ENCODE measurements at regions of chr12 and their contacts with region 1.

Region 1: DNA sequence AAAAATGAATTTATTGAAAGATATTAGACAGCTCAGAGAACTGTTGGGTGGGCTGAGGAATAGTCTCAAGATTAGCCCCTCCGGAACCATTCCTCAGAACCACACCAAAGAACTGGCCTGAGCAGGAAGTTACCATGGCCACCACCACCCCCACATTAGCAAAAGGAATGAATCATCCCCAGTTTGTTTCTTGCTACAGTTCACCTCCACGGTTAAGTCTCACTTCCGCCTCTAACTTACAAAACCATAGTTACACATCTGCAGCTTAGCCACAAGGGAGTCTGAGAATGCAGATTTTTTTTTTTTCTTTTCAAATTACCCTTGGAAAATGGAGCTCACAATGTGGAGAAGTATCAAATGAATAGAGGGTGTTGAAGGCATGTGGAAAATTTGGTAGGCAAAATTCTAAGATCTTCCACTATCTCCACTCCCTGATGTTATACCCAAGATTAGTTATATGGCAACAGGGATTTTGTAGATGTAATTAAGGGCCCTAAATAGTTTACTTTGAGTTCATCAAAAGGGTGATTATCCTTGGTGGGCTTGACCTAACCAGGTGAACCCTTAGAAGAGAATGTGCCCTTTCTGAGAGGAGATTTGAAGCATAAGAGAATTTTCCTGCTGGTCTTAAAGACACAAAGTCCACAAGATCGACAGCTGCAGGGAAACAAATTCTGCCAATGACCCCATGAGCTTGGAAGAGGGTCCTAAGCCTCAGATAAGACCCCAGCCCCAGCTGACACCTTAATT is 129.8 kb upstream of the KRR1 start:
- DNase-seq: peak; percentile 32
- H3K4me3 Mint-ChIP-seq: peak overlapping the region; percentile 19
- H3K27ac Mint-ChIP-seq: peak overlapping the region; percentile 89
- H3K4me1 Mint-ChIP-seq: peaks cover 34% of the 10 kb centered on the region
- H3K27me3 Mint-ChIP-seq: no peaks in the 10 kb centered on the region

Region 2: GRCh38 chr12:75658901-75659383 is 17.7 kb after region 1 on chr12:
- intact Hi-C with region 1: loop called (anchors 1 kb)
- DNase-seq: no peak
- H3K4me3 Mint-ChIP-seq: no peak overlapping the region
- H3K27ac Mint-ChIP-seq: peak overlapping the region; percentile 33
- H3K4me1 Mint-ChIP-seq: peaks cover 36% of the 10 kb centered on the region
- H3K27me3 Mint-ChIP-seq: no peaks in the 10 kb centered on the region

Region 3: DNA sequence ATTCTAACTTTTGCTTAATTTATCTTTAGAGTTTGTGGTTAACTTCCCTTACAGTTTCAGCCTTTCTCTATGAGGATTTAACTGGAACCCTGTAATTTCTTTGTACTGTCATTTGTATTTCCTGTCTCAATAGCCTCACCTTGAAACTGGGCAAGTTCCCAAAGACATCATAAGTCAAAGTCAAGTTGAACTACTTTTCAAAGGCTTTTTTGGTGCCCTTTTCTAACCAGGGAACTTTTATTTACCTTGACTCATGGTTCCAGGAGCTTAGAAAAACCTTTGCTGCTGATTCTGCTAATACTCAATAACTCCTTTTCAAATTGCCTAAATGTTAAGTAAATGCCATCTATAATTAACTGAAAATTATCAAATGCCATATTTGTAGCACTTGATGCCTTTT is 71.0 kb after region 1 on chr12:
- intact Hi-C with region 1: no loop called
- DNase-seq: no peak
- H3K4me3 Mint-ChIP-seq: no peak overlapping the region
- H3K27ac Mint-ChIP-seq: no peak overlapping the region
- H3K4me1 Mint-ChIP-seq: peaks cover 5% of the 10 kb centered on the region
- H3K27me3 Mint-ChIP-seq: peaks cover 4% of the 10 kb centered on the region

Region 4: DNA sequence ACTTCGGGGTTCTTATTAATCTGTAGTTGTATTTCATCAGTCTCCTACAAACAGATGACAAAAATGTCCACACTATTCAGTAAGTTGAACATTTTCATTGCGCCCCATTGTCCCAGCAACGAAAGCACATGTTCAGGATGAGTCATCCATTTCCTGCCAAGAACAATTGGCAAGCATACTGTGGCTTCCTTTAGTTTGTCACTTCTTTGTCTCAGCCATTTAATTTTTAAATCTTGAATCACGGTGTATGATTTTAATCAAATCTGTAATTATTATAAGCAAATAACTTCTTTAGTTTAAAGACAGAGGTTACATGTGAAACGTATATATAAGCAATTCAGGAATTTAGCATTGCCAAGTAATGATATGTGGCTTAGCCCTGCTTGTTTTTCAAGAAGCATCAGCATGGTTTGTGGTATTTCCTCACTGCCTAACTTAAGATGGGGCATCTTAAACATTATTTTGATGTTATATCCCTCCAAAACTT is 81.6 kb after region 1 on chr12:
- intact Hi-C with region 1: loop called (anchors 5 kb)
- DNase-seq: peak; percentile 29
- H3K4me3 Mint-ChIP-seq: peak overlapping the region; percentile 37
- H3K27ac Mint-ChIP-seq: peak overlapping the region; percentile 81
- H3K4me1 Mint-ChIP-seq: peaks cover 16% of the 10 kb centered on the region
- H3K27me3 Mint-ChIP-seq: peaks cover 3% of the 10 kb centered on the region

Region 5: DNA sequence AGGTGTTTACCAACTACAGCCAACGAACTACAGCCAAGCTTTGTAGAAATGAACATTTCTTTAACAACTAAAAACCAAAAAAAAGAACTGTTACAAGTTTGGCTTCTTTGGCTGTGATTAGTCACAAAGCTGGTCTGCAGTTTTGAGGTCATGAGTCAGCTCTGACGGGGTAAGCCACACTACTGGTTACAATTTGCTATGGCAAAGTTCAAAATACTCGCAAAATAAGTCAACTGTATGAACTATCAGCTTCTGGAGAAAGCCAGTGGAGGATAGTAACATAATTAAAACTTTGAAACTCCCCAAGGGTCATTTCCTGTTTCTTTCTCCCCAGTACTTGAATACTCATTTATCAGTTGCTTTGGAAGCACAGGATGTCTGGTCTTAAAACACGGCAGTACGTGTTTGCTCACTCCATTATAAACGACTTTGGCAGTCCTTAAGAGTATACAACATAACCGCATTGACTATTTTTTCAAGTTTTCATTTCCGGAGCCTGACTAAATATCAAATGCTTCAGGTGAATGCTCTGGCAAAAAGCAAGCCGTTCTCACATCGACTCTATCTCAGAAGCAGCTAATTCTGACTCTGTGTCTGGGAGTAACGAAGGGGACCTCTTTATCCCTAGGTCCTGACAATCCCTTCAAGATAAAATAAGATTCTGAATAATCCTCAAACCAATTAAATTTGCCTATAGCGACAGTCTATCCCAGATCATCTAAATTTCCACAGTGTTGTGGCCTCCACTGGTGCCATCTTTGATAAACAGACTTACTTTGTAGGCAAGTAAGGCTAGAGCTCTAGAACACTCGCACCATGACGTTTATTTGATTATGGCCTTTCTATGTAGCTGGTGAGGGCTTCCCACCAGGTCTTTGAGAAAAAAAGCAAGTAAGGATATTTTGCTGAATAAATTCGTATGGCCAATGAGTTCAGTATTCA is 379.8 kb after region 1 on chr12:
- intact Hi-C with region 1: loop called (anchors 2 kb)
- DNase-seq: peak; percentile 68
- H3K4me3 Mint-ChIP-seq: peak overlapping the region; percentile 74
- H3K27ac Mint-ChIP-seq: peak overlapping the region; percentile 99
- H3K4me1 Mint-ChIP-seq: peaks cover 73% of the 10 kb centered on the region
- H3K27me3 Mint-ChIP-seq: no peaks in the 10 kb centered on the region

Measured in activated T-helper 1 cell treated with anti-CD3 and anti-CD28 coated beads, Interleukin-12 subunit alpha, Interleukin-12 subunit beta, Interleukin-2, Interleukin-4 antibody, amounts not matched to agents 30 ng/mL and 10 ng/mL and 1 ng/mL, durations not matched to agents 14 hours and 24 hours and 36 hours (primary cell).